ENCODE measurements at regions of chr16 and their contacts with region 1.

Region 1: DNA sequence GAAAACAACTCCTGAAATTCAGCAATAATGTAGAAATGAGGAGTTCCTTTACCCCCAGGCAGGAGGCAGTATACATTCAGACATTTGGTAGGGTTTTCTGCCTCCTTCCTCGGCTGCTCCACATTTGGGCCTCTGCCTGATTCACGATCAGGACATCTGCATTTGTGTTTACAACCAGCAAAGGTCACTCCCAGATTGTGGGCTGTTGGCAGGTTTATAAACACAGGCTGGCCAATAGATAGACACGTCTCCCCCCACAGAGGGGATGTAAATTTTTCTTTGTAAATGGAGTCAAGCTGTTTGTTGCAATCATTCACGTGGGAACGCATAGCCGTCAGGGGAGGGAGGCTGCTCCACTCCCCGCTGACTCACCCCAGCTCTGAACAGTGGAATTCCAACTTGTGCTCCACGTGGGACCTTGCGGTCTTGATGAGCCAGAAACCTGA is 252.1 kb upstream of the N4BP1 start:
- DNase-seq: no peak
- H3K4me3 ChIP-seq: no peak overlapping the region
- H3K27ac ChIP-seq: no peak overlapping the region
- H3K4me1 ChIP-seq: no peaks in the 10 kb centered on the region
- H3K27me3 ChIP-seq: peaks cover 0 to 9% (median 0%) of the 10 kb centered on the region in 4 donors
- CTCF ChIP-seq: no peak
- EP300 ChIP-seq: no peak
- POLR2A ChIP-seq: no peak

Region 2: DNA sequence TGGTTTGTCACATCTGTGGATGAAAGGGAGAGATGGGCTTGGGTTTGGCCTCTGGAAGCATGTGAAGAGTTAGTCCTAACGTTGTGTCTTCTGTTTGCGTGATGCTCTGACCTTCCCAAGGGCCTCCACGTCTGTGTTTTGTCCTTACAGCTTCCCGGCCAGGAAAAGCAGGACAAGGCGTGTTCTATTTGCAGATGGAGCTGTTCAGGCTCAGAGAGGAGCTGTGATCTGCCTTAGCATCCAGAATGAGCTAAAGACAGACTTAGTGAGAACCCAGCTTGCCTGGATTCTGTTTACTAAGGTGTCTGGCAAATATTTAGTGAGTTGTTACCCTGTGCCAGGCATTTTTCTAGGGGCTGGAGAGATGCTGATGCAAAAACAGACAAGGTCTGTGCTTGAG is 137.4 kb after region 1 on chr16:
- intact Hi-C with region 1: loop called (anchors 10 kb)
- DNase-seq: no peak
- H3K4me3 ChIP-seq: no peak overlapping the region
- H3K27ac ChIP-seq: no peak overlapping the region
- H3K4me1 ChIP-seq: no peaks in the 10 kb centered on the region
- H3K27me3 ChIP-seq: peaks cover 0 to 12% (median 0%) of the 10 kb centered on the region in 4 donors
- CTCF ChIP-seq: no peak
- EP300 ChIP-seq: no peak
- POLR2A ChIP-seq: no peak

Region 3: GRCh38 chr16:50338371-50339231 is 1476.5 kb after region 1 on chr16:
- intact Hi-C with region 1: no loop called
- DNase-seq: no peak
- H3K4me3 ChIP-seq: no peak overlapping the region
- H3K27ac ChIP-seq: peak overlapping the region in 1 of 4 donors; percentile 4
- H3K4me1 ChIP-seq: peaks cover 0 to 60% (median 37%) of the 10 kb centered on the region in 4 donors
- H3K27me3 ChIP-seq: no peaks in the 10 kb centered on the region
- CTCF ChIP-seq: no peak
- EP300 ChIP-seq: no peak
- POLR2A ChIP-seq: no peak